ENCODE measurements at regions of chr3 and their contacts with region 1.

Region 1: GRCh38 chr3:54515441-54516213 is 393.3 kb downstream of the CACNA2D3 start:
- DNase-seq: no peak
- ATAC-seq: peak in 1 of 4 donors; percentile 50
- H3K4me3 ChIP-seq: no peak overlapping the region
- H3K27ac ChIP-seq: no peak overlapping the region
- H3K4me1 ChIP-seq: no peaks in the 10 kb centered on the region
- H3K27me3 ChIP-seq: no peaks in the 10 kb centered on the region
- CTCF ChIP-seq: no peak

Region 2: DNA sequence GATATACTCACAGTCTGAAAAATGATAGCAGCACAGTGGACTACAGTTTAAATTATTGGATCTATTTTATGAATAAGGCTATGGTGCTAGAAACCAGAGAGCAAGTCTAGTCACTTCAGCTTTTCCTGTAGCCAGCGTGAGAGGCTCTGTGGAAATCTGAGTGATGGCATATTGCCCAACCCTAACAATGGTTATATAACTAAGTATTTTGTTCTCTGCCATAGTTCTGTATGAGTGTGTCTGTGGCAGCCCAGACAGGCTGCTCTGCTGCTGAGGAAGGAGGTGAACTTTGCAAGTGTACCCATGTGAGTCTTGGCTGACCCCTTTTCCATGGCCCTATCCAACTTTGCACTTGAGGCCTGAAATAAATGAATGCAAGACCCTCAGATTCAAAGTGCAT is 306.6 kb after region 1 on chr3:
- intact Hi-C with region 1: loop called in 1 of 2 experiments (anchors 10 kb)
- DNase-seq: no peak
- ATAC-seq: peak; percentile 64 to 82 (median 68)
- H3K4me3 ChIP-seq: no peak overlapping the region
- H3K27ac ChIP-seq: no peak overlapping the region
- H3K4me1 ChIP-seq: no peaks in the 10 kb centered on the region
- H3K27me3 ChIP-seq: no peaks in the 10 kb centered on the region
- CTCF ChIP-seq: no peak